GM10248 (cell line): ENCODE measurements at regions of chr15 and their contacts with region 1.

Region 1: DNA sequence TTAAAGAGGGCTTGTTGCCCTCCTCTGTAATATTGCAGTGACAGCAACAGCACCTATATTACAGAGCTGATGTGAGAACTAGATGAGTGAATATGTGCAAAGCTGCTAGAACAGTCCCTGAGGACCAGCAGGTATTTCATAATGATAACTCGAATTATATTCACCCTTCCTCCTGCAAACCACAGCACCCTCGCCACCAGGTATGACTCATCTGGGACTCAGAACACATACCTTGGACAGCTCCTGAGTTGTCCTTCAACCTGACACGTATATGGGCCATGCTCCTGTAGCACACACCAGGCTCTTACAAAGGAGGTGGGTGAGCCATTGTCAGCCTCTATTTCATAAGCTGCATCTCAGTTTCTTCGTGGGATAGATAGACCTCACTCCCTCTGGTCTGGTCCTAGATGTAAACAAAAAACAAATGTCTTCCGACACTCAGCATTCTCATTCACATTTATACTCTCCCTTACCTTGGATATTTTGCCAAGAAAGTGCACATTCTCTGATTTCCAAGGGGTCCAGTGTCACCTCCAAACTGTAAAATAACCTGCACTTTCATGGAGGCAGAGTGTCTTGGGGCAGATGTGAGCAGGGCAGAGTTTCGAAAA is 124.5 kb downstream of the TLE3 start:
- DNase-seq: no peak
- CTCF ChIP-seq: no peak

Region 2: DNA sequence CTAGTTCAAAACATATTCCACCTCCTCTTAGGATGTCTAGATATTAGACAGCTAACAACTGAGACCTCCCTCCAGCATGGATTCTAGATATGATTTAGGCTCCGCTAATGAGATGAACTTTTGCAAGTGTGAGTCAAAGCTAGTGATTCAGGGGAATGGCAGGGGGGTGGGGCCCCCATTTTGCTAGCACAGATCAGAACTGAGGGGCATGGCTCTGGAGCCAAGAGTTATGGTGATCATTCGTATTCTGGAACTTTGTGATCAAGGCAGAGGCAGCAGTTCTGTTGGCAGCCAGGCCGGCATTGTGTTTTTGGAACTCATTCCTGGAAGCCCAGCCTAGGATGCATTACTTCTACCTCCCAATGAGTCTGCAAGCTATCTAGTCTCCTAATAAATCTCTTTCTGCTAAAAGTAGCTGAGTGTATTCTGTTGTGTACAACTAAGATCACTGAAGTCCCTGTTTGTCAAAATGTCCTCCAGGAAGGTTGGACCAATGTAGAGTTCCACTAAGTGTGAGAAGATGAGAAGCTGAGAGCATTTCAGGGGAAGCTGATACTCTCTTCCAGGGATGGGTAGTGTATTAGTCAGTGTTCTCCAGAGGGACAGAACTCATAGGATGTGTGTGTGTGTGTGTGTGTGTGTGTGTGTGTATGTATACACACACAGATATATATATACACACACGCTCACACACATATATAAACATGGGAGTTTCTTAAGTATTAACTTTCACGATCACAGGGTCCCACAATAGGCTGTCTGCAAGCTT is 188.2 kb before region 1 on chr15:
- CTCF ChIA-PET with region 1: no interaction called
- POLR2A ChIA-PET with region 1: no interaction called
- DNase-seq: no peak
- CTCF ChIP-seq: no peak

Region 3: GRCh38 chr15:69983771-69984170 is 10.6 kb after region 1 on chr15:
- CTCF ChIA-PET with region 1: interaction called, 14 read pairs
- POLR2A ChIA-PET with region 1: no interaction called
- DNase-seq: no peak
- CTCF ChIP-seq: no peak